ENCODE measurements at regions of chr18 and their contacts with region 1.

Region 1: GRCh38 chr18:58043491-58044379 is at the start of gene NEDD4L:
- DNase-seq: peak; percentile 82
- H3K4me3 ChIP-seq: peak within 1 kb of the TSS; percentile 80 to 90 (median 85)
- H3K27ac ChIP-seq: peak within 1 kb of the TSS; percentile 71
- H3K4me1 ChIP-seq: peaks cover 17% of the 10 kb centered on the region
- H3K27me3 ChIP-seq: no peaks in the 10 kb centered on the region
- CTCF ChIP-seq: peak; percentile 57 to 93
- total RNA-seq, gene NEDD4L: 145 to 148 TPM

Region 2: DNA sequence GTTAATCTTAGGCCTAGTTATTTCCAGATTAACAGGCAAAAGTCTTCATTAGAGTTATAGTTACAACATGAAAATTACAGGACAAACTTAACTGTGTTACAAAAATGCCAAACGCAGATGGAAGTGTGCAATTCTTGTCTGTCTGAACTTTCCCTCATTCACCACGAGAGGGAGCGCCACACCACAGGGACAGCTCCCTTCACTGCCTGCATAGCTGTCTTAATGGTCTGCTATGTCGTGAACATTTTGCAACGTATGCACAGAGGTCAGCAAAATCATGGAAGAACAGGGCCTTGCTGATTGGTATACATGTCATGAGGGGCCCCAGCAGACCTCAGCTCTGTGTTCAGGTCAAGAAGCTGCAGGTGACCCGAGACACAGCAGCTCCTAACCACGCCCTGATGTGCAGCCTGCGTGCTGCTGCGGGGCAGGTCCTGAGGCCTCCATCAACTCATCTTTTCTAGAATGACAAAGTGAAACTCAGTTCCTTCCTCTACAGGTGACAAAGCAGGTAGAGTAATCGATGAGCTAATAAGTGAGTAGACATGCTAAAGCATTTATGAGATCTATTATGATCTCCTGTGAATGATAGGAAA is 161.8 kb before region 1 on chr18:
- CTCF ChIA-PET with region 1: no interaction called
- dilution Hi-C with region 1: no loop called
- in situ Hi-C with region 1: loop called in 1 of 2 experiments (anchors 25 kb)
- intact Hi-C with region 1: loop called (anchors 1 kb)
- DNase-seq: peak; percentile 61
- H3K4me3 ChIP-seq: no peak overlapping the region
- H3K27ac ChIP-seq: no peak overlapping the region
- H3K4me1 ChIP-seq: no peaks in the 10 kb centered on the region
- H3K27me3 ChIP-seq: no peaks in the 10 kb centered on the region
- CTCF ChIP-seq: peak; percentile 97

Region 3: GRCh38 chr18:58117786-58118403 is 74.2 kb after region 1 on chr18:
- CTCF ChIA-PET with region 1: interaction called, 14 read pairs
- dilution Hi-C with region 1: no loop called
- in situ Hi-C with region 1: loop called in 1 of 2 experiments (anchors 5 kb)
- intact Hi-C with region 1: loop called (anchors 1 kb)
- DNase-seq: peak; percentile 94
- H3K4me3 ChIP-seq: no peak overlapping the region
- H3K27ac ChIP-seq: peak overlapping the region; percentile 35
- H3K4me1 ChIP-seq: peaks cover 14% of the 10 kb centered on the region
- H3K27me3 ChIP-seq: no peaks in the 10 kb centered on the region
- CTCF ChIP-seq: no peak

Region 4: GRCh38 chr18:58180738-58181353 is 137.1 kb after region 1 on chr18:
- CTCF ChIA-PET with region 1: no interaction called
- dilution Hi-C with region 1: no loop called
- in situ Hi-C with region 1: no loop called
- intact Hi-C with region 1: loop called (anchors 1 kb)
- DNase-seq: peak; percentile 37
- H3K4me3 ChIP-seq: no peak overlapping the region
- H3K27ac ChIP-seq: no peak overlapping the region
- H3K4me1 ChIP-seq: peaks cover 22% of the 10 kb centered on the region
- H3K27me3 ChIP-seq: no peaks in the 10 kb centered on the region
- CTCF ChIP-seq: peak; percentile 88 to 89

Region 5: DNA sequence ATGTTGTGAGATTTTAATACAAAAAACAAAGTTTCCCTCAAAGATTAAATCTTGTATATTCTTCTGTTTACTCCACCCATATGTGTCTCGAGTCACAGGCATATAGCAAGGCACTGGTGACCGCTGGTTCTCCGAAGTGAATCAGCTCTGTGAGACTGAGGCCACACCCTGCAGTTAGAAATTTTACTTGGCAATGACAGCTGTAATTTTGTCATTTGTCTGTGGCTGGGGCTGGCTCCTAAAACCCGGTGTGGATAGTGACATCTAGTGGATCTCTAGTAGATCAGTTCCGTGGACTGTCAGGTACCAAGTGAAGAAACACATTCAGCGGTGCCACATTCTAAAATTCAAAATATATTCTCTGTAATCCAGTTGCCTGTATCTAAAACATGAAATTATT is 278.3 kb after region 1 on chr18:
- CTCF ChIA-PET with region 1: interaction called, 3 read pairs
- dilution Hi-C with region 1: no loop called
- in situ Hi-C with region 1: no loop called
- intact Hi-C with region 1: loop called (anchors 1 kb)
- DNase-seq: peak; percentile 86
- H3K4me3 ChIP-seq: no peak overlapping the region
- H3K27ac ChIP-seq: peak overlapping the region; percentile 83
- H3K4me1 ChIP-seq: peaks cover 14% of the 10 kb centered on the region
- H3K27me3 ChIP-seq: no peaks in the 10 kb centered on the region
- CTCF ChIP-seq: peak; percentile 65 to 68

Measured in mammary epithelial cell (primary cell).